ENCODE measurements at regions of chr1 and their contacts with region 1.

Region 1: DNA sequence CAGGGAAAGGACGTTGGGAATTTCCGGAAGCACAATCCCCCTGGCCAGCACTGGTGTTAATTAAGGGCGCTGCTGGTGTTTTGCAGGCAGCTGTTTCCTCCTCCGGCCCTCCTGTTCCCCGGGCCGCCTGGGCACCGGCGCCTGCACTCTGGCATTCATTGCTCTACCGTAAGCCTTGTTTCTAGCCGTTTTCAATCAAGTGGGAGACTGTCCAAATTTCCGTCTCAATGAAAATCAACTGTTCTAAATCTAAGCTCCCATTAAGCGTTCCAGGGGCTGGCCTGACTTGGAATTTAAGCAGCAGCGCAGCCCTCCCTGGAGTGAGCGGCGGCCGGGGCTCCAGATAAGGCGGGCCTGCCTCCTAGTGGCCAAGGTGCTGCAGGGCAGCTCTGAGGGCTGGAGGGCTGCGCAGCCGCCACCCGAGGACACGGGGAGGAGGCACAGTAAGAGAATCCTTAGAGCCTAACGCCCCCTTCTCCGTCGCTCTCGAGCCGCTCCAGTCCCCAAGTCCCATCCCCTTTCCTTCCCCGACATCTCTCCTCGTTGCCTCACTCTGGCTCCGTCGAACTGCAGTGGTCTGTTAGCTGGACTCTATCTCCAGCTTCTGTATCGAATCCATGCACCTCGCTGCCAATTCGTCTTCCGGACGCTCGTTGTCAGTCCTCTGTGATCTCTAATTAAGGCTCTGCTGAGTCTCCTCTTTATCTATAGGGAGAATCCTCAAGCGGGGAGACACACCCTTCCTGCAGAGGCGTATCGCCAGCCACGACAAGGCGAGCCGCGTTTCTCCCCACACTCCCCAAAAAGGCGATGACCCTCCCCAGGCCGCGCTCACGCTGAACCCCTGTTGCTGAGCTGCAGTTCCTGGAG is 57.8 kb upstream of the LRRC8D start:
- DNase-seq: peak; percentile 89 to 94 (median 91)
- ATAC-seq: peak; percentile 96 to 99 (median 98)
- H3K4me3 ChIP-seq: peak overlapping the region; percentile 12 to 63 (median 50)
- H3K27ac ChIP-seq: peak overlapping the region; percentile 41 to 85 (median 68)
- H3K4me1 ChIP-seq: peaks cover 0 to 56% (median 35%) of the 10 kb centered on the region in 12 donors
- H3K27me3 ChIP-seq: no peaks in the 10 kb centered on the region
- CTCF ChIP-seq: peak; percentile 97 to 100 (median 99)
- POLR2A ChIP-seq: no peak

Region 2: GRCh38 chr1:89524369-89525168 is 238.4 kb before region 1 on chr1 and contains the start of gene LRRC8B:
- intact Hi-C with region 1: loop called in 3 of 10 experiments (anchors 1 to 10 kb)
- DNase-seq: peak; percentile 95 to 97 (median 95)
- ATAC-seq: peak; percentile 99 to 100 (median 100)
- H3K4me3 ChIP-seq: peak within 1 kb of the TSS; percentile 76 to 97 (median 94)
- H3K27ac ChIP-seq: peak within 1 kb of the TSS; percentile 58 to 95 (median 91)
- H3K4me1 ChIP-seq: peaks cover 0 to 46% (median 12%) of the 10 kb centered on the region in 12 donors
- H3K27me3 ChIP-seq: no peaks in the 10 kb centered on the region
- CTCF ChIP-seq: no peak
- POLR2A ChIP-seq: peak in 1 of 2 donors; percentile 73
- total RNA-seq, gene LRRC8B: 3.4 to 10.4 (median 5.0) TPM

Region 3: GRCh38 chr1:89605692-89606091 is 157.3 kb before region 1 on chr1:
- intact Hi-C with region 1: loop called in 2 of 10 experiments (anchors 5 to 10 kb)
- DNase-seq: no peak
- ATAC-seq: no peak
- H3K4me3 ChIP-seq: no peak overlapping the region
- H3K27ac ChIP-seq: peak overlapping the region in 4 of 12 donors; percentile 9 to 26 (median 20)
- H3K4me1 ChIP-seq: peaks cover 13 to 79% (median 58%) of the 10 kb centered on the region in 12 donors
- H3K27me3 ChIP-seq: no peaks in the 10 kb centered on the region
- CTCF ChIP-seq: no peak
- POLR2A ChIP-seq: no peak

Region 4: DNA sequence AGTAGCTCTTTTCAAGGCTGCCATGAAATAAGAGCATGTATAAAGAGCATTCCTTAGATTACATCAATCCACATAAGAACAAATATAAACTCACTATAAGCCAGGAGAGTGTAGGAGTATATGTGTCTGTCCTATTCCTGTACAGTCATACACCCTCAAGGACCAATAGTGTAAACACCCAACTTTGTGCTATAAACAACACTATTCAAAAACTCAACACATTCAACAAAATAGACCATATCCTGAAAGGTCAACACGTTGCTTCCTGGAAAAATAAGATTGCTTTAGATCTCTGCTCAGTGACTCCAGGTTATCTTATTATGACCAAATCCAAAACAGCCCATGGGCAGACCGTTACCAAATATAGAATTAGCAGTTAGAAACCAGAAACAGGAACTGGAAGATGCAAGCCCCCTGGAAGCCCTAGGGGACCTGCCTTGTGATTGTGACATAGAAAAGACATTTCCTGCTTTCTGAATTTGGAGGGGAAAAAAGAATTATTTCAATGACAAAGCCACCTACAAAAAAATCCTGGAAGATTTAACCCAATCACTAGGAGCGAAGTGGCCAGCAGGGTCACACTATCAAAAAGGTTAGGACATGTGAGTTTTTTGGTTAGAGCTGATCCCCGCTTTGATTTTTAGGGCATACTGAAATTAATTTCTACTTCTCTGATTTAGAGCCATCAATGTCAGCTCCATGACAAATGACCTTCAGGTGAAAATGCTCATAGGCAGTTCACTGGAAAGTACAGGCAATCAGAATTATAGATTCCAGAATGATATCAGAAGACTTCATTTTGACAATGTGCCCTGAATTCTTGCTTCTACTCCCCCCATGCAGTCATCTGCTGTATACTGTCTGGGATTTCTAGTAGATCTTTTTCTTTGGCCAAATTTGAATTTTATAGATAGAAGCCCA is 70.2 kb before region 1 on chr1:
- intact Hi-C with region 1: loop called in 2 of 10 experiments (anchors 10 kb)
- DNase-seq: peak in 3 of 5 donors; percentile 39 to 67 (median 47)
- ATAC-seq: peak; percentile 32 to 92 (median 78)
- H3K4me3 ChIP-seq: no peak overlapping the region
- H3K27ac ChIP-seq: peak overlapping the region in 11 of 12 donors; percentile 3 to 81 (median 36)
- H3K4me1 ChIP-seq: peaks cover 9 to 70% (median 62%) of the 10 kb centered on the region in 12 donors
- H3K27me3 ChIP-seq: no peaks in the 10 kb centered on the region
- CTCF ChIP-seq: no peak
- POLR2A ChIP-seq: no peak

Region 5: GRCh38 chr1:89706700-89707012 is 56.4 kb before region 1 on chr1:
- intact Hi-C with region 1: no loop called
- DNase-seq: no peak
- ATAC-seq: no peak
- H3K4me3 ChIP-seq: no peak overlapping the region
- H3K27ac ChIP-seq: peak overlapping the region in 2 of 12 donors; percentile 23 to 71
- H3K4me1 ChIP-seq: peaks cover 0 to 45% (median 12%) of the 10 kb centered on the region in 12 donors
- H3K27me3 ChIP-seq: no peaks in the 10 kb centered on the region
- CTCF ChIP-seq: no peak
- POLR2A ChIP-seq: no peak

Measured in heart left ventricle (tissue), 16 donors.